ENCODE measurements at regions of chr17 and their contacts with region 1.

Region 1: GRCh38 chr17:58648236-58648806 is 43.5 kb downstream of the TEX14 start:
- DNase-seq: no peak
- ATAC-seq: no peak
- H3K4me3 ChIP-seq: no peak overlapping the region
- H3K4me3 Mint-ChIP-seq: no peak overlapping the region
- H3K27ac ChIP-seq: no peak overlapping the region
- H3K27ac Mint-ChIP-seq: no peak overlapping the region
- H3K4me1 ChIP-seq: no peaks in the 10 kb centered on the region
- H3K4me1 Mint-ChIP-seq: no peaks in the 10 kb centered on the region
- H3K27me3 ChIP-seq: no peaks in the 10 kb centered on the region
- H3K27me3 Mint-ChIP-seq: no peaks in the 10 kb centered on the region
- CTCF ChIP-seq: no peak

Region 2: GRCh38 chr17:58671969-58672368 is 23.6 kb after region 1 on chr17:
- CTCF ChIA-PET with region 1: no interaction called
- POLR2A ChIA-PET with region 1: no interaction called
- intact Hi-C with region 1: loop called in 1 of 2 experiments (anchors 1 kb)
- DNase-seq: no peak
- ATAC-seq: no peak
- H3K4me3 ChIP-seq: no peak overlapping the region
- H3K4me3 Mint-ChIP-seq: no peak overlapping the region
- H3K27ac ChIP-seq: no peak overlapping the region
- H3K27ac Mint-ChIP-seq: no peak overlapping the region
- H3K4me1 ChIP-seq: no peaks in the 10 kb centered on the region
- H3K4me1 Mint-ChIP-seq: peaks cover 2% of the 10 kb centered on the region
- H3K27me3 ChIP-seq: no peaks in the 10 kb centered on the region
- H3K27me3 Mint-ChIP-seq: peaks cover 2% of the 10 kb centered on the region
- CTCF ChIP-seq: no peak